Ascending aorta (tissue), 2 donors: ENCODE measurements at regions of chr4 and their contacts with region 1.

Region 1: DNA sequence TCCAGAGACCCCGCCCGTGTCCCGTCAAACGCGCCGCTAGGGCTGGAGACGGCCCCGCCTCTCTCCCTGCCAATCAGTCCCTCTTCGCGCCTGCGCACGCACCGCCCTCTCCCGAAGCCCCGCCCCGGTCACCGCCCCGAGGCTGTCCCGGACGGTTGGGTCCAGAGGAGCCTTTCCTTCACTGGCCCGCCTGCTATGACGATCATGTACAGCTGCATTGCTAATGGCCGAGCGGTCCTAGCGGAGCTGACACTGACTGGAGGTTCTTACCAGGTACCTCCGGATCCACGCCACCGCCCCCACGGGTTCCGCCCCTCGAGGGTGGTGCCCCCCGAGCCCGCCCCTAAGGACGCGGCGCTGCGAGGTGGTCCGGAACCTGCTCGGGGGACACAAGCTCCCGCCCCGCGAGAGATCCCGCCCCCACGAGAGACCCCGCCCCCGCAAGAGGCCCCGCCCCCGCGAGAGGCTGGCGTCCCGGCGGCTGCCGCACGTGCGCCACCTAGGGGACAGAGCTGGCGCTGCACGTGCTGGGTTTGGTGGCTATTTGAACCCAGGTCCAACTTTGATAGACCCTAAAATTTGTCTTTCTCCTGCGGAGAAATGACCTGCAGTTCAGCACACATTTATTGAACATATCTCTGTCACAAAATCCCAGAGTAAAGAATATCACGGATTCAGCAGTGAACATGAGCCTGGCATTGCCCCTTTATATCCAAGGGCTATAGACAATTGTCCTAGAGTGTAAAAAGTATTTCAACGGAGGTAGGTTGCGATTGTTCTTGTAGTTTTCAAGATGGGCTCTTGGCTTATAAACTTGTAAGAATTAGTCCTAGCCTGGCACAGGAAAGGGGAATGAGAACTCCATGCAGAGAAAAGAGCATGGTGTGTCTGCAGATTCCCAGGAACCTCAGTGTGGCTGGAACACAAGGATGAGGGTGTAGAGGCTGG is 88.7 kb downstream of the HNRNPD start:
- DNase-seq: peak; percentile 99 to 100
- H3K4me3 ChIP-seq: peak overlapping the region; percentile 53 to 58
- H3K27ac ChIP-seq: peak overlapping the region; percentile 58 to 66
- H3K4me1 ChIP-seq: peaks cover 0 to 5% of the 10 kb centered on the region in 2 donors
- H3K27me3 ChIP-seq: no peaks in the 10 kb centered on the region
- CTCF ChIP-seq: peak; percentile 70 to 100 (median 100)

Region 2: DNA sequence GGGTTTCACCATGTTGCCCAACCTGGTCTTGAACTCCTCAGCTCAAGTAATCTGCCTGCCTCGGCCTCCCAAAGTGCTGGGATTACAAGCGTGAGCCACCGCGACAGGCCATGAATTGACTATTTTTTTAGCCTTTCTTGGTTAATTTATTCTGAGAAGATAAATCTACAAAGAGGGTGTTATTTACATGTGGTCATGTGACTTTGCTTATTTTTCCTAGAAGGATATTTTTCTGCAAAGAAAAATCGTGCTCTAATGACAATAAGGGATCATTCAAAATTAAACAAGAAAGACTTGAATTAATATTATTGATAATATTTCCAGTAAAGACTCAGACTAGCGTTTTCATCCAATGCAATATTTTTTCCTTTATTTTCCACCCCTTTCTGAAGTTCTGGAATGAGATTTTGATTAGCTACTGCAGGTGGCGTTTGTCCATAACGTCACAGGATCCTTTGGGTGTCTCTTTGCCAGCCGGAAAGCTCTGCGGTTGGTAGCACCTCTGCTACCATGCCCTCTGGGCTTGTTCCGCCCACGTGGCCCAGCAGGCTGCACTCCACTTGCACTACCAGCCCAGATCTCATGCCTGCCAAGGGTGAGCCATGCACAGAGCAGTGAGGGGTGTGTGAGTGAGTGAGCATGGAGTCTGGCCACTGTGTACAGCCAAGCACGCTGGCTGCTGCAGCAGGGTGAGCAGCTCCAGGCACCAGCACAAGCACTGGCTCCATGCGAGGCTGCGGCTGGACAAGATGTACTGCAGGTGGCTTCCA is 95.0 kb after region 1 on chr4:
- intact Hi-C with region 1: no loop called
- DNase-seq: no peak
- H3K4me3 ChIP-seq: no peak overlapping the region
- H3K27ac ChIP-seq: no peak overlapping the region
- H3K4me1 ChIP-seq: no peaks in the 10 kb centered on the region
- H3K27me3 ChIP-seq: no peaks in the 10 kb centered on the region
- CTCF ChIP-seq: no peak

Region 3: DNA sequence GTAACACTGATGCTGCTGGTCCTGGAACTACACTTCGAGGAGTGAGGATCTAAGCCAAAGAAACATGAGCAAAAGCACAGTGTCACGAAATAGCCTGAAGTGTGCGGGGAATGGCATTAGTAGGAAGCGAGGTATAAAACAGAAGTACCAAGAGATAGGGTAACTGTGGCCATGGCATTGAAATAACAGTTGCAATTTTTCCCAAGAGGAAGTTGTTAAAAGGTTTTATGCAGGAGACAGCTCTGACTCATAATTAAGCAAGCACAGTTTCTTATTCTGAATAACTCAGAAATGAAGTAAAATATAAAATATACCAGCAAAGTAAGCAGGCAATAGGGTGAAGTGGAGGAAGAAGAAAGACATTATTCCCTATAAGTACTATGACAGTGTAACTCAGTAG is 366.9 kb after region 1 on chr4:
- intact Hi-C with region 1: no loop called
- DNase-seq: no peak
- H3K4me3 ChIP-seq: no peak overlapping the region
- H3K27ac ChIP-seq: no peak overlapping the region
- H3K4me1 ChIP-seq: no peaks in the 10 kb centered on the region
- H3K27me3 ChIP-seq: no peaks in the 10 kb centered on the region
- CTCF ChIP-seq: no peak

Region 4: GRCh38 chr4:82890901-82891706 is 606.0 kb after region 1 on chr4 and contains the start of gene SEC31A:
- intact Hi-C with region 1: loop called (anchors 5 kb)
- DNase-seq: peak; percentile 75 to 97
- H3K4me3 ChIP-seq: peak within 1 kb of the TSS; percentile 87 to 91
- H3K27ac ChIP-seq: peak within 1 kb of the TSS; percentile 98 to 99
- H3K4me1 ChIP-seq: peaks cover 8 to 11% of the 10 kb centered on the region in 2 donors
- H3K27me3 ChIP-seq: no peaks in the 10 kb centered on the region
- CTCF ChIP-seq: peak in 1 of 3 experiments; percentile 20
- total RNA-seq, gene SEC31A: 100 TPM

Region 5: GRCh38 chr4:83034630-83035494 is 749.7 kb after region 1 on chr4 and contains the start of gene COPS4:
- intact Hi-C with region 1: loop called (anchors 2 kb)
- DNase-seq: peak; percentile 95 to 99
- H3K4me3 ChIP-seq: peak within 1 kb of the TSS; percentile 76 to 79
- H3K27ac ChIP-seq: peak within 1 kb of the TSS; percentile 92 to 94
- H3K4me1 ChIP-seq: peaks cover 0 to 16% of the 10 kb centered on the region in 2 donors
- H3K27me3 ChIP-seq: no peaks in the 10 kb centered on the region
- CTCF ChIP-seq: peak; percentile 15 to 59 (median 43)
- total RNA-seq, gene COPS4: 83.5 TPM